Caco-2 (cell line): ENCODE measurements at regions of chr2 and their contacts with region 1.

Region 1: DNA sequence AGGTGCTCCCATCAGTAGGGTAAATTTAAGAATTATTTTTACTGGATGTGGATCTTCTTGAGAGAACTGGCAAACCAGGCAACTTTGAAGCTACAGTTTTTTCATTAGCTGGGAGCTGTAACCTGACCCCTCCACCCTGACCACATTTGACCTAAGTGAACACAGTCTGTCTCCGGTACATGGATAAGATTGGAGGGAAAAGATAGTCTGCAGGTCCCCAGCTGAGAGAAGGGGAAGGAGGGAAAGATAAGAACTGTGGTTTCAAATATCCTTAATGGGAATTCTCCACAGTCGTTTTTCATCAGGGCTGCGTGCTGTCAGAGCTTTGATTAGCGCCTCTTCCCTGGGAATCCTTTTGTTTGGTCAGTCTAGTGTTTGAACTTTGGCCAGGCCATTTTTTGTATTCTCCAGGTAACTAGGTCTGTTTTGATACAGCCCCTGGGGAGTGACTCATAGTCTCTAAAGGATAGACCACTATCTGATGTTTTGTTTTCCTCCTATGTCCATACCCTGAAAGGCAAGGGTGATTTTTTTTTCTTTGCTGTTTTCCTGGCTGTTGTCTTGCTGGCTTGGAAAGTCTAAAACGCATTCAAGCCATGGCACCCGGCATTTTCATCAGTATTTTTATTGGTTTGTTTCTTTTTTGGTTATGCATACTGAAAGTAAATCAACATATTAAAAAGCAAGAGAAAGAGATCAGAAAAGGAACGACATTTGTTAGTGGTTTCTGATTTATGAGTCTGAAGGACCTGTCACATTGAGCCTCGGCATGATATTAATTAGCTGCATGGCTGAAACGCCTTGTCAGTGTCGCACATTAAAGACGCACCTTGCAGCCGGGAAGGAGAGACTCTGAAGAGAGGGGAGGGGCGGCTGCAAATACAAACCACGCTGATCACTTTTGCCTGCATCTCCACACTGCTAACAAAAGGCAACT is 183.4 kb upstream of the FN1 start:
- DNase-seq: peak; percentile 89 to 94
- H3K4me3 ChIP-seq: peak overlapping the region; percentile 10; the same call in 1 of the 2 replicates
- H3K4me3 Mint-ChIP-seq: peak overlapping the region; percentile 68
- H3K27ac Mint-ChIP-seq: peak overlapping the region; percentile 95
- H3K4me1 ChIP-seq: peaks cover 58% of the 10 kb centered on the region
- H3K4me1 Mint-ChIP-seq: peaks cover 50% of the 10 kb centered on the region
- H3K27me3 ChIP-seq: no peaks in the 10 kb centered on the region
- H3K27me3 Mint-ChIP-seq: no peaks in the 10 kb centered on the region
- CTCF ChIP-seq: no peak

Region 2: DNA sequence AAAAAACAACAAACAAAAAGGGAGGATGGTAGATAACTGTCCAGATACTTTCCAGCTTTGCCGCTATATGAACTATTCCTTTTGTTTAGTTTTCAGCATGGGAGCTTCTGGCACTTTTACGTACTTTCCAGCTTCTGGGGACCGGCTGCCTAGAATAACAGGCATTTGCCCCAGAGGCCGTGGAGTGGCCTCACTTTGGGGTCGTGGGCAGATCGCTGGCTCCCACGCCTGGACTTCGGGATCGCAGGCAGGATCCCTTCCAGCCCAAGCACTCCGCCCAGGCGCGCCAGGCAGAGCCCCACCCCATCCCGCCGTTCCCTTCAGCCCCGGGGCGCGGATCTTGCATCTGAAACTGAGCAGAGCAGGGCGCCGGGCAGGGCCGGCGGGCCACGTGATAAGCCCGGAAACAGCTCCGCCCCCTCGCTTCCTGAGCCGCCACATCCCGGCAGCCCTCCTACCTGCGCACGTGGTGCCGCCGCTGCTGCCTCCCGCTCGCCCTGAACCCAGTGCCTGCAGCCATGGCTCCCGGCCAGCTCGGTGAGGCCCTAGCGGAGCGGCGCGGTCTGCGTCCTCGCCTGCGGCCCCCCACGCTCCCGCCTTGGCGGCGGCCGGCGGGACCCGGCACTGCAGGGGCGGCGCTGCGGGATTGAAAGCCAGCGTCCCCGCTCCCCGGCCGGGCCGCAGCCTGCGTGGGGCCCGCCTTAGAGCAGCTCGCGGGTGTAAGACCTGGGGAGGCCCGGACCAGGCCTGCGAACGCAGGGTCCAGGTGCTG is 307.5 kb before region 1 on chr2 and contains the start of gene ATIC:
- CTCF ChIA-PET with region 1: no interaction called
- POLR2A ChIA-PET with region 1: no interaction called
- intact Hi-C with region 1: loop called (anchors 10 kb)
- DNase-seq: peak; percentile 97
- H3K4me3 ChIP-seq: peak within 1 kb of the TSS; percentile 57
- H3K4me3 Mint-ChIP-seq: peak within 1 kb of the TSS; percentile 87
- H3K27ac Mint-ChIP-seq: peak within 1 kb of the TSS; percentile 83
- H3K4me1 ChIP-seq: peaks cover 25% of the 10 kb centered on the region
- H3K4me1 Mint-ChIP-seq: peaks cover 23% of the 10 kb centered on the region
- H3K27me3 ChIP-seq: no peaks in the 10 kb centered on the region
- H3K27me3 Mint-ChIP-seq: no peaks in the 10 kb centered on the region
- CTCF ChIP-seq: no peak
- total RNA-seq, gene ATIC: 318 and 325 TPM in 2 replicates

Region 3: GRCh38 chr2:215435809-215436704 is 183.2 kb before region 1 on chr2 and contains the start of gene FN1:
- CTCF ChIA-PET with region 1: no interaction called
- POLR2A ChIA-PET with region 1: interaction called, 7 read pairs
- intact Hi-C with region 1: loop called (anchors 1 kb)
- DNase-seq: peak; percentile 95 to 96
- H3K4me3 ChIP-seq: peak within 1 kb of the TSS; percentile 99
- H3K4me3 Mint-ChIP-seq: peak within 1 kb of the TSS; percentile 84
- H3K27ac Mint-ChIP-seq: peak within 1 kb of the TSS; percentile 94
- H3K4me1 ChIP-seq: peaks cover 40% of the 10 kb centered on the region
- H3K4me1 Mint-ChIP-seq: peaks cover 26% of the 10 kb centered on the region
- H3K27me3 ChIP-seq: no peaks in the 10 kb centered on the region
- H3K27me3 Mint-ChIP-seq: no peaks in the 10 kb centered on the region
- CTCF ChIP-seq: no peak
- total RNA-seq, gene FN1: 3,805 and 3,872 TPM in 2 replicates

Region 4: DNA sequence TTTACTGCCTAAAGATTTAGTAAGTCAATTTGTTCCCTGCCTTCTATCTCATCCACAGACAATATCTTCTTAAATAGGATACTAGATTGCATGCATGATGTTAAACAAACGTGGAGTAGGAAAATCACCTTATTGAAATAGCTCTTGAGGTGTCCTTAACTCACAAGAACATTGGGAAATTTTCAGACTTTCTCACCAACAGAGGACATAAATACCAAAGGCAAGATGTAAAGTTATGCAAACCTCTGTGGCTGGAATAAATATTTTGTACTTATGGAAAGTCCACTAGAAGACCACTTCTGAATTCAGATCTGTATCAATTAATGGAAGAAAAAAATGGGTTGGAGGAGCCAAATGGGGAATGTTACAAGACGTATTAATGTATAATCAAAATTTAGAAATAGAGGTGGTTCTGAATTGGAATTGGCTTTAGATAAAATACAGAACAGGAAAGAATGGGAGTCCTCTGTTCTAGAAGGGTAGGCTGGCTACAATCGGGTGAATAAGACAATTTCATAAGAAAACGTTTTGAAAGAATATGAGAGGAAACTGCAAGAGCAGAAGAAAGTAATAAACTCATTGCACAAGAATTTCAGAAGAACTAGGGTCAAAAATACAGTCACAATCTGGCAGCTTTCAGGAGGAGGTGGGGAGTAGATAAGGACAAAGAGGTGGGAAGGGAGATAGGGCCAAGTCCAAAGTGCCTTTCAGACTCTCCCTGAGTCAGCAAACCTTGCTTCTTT is 114.1 kb before region 1 on chr2:
- CTCF ChIA-PET with region 1: no interaction called
- POLR2A ChIA-PET with region 1: no interaction called
- intact Hi-C with region 1: loop called (anchors 1 kb)
- DNase-seq: peak; percentile 68 to 70
- H3K4me3 ChIP-seq: no peak overlapping the region
- H3K4me3 Mint-ChIP-seq: peak overlapping the region; percentile 54
- H3K27ac Mint-ChIP-seq: peak overlapping the region; percentile 46
- H3K4me1 ChIP-seq: peaks cover 42% of the 10 kb centered on the region
- H3K4me1 Mint-ChIP-seq: peaks cover 38% of the 10 kb centered on the region
- H3K27me3 ChIP-seq: no peaks in the 10 kb centered on the region
- H3K27me3 Mint-ChIP-seq: no peaks in the 10 kb centered on the region
- CTCF ChIP-seq: no peak

Region 5: GRCh38 chr2:215579809-215580208 is 39.5 kb before region 1 on chr2:
- CTCF ChIA-PET with region 1: no interaction called
- POLR2A ChIA-PET with region 1: no interaction called
- intact Hi-C with region 1: no loop called
- DNase-seq: no peak
- H3K4me3 ChIP-seq: no peak overlapping the region
- H3K4me3 Mint-ChIP-seq: no peak overlapping the region
- H3K27ac Mint-ChIP-seq: no peak overlapping the region
- H3K4me1 ChIP-seq: peaks cover 8% of the 10 kb centered on the region
- H3K4me1 Mint-ChIP-seq: no peaks in the 10 kb centered on the region
- H3K27me3 ChIP-seq: no peaks in the 10 kb centered on the region
- H3K27me3 Mint-ChIP-seq: no peaks in the 10 kb centered on the region
- CTCF ChIP-seq: no peak

Region 6: GRCh38 chr2:215598376-215598975 is 20.8 kb before region 1 on chr2:
- CTCF ChIA-PET with region 1: no interaction called
- POLR2A ChIA-PET with region 1: no interaction called
- intact Hi-C with region 1: no loop called
- DNase-seq: no peak
- H3K4me3 ChIP-seq: no peak overlapping the region
- H3K4me3 Mint-ChIP-seq: no peak overlapping the region
- H3K27ac Mint-ChIP-seq: no peak overlapping the region
- H3K4me1 ChIP-seq: no peaks in the 10 kb centered on the region
- H3K4me1 Mint-ChIP-seq: no peaks in the 10 kb centered on the region
- H3K27me3 ChIP-seq: no peaks in the 10 kb centered on the region
- H3K27me3 Mint-ChIP-seq: no peaks in the 10 kb centered on the region
- CTCF ChIP-seq: no peak

Region 7: DNA sequence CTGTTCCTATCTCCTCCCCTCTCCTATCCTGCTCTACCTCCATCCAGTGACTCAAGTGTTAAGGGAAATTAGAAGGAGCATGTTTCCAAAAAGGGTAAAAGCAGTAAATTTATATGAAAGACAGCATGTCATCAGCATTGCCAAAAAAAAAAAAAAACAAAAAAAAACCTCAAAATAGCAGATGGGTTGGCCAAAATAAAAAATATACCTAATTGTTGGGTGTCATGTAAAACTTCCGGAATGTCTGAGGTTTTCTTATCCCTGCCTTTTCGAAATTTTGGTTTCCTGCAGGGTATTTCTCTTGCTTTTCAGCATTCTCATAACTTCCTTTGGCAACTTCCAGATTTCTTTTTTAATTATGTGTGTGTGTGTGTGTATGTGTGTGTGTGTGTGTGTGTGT is 58.2 kb after region 1 on chr2:
- CTCF ChIA-PET with region 1: no interaction called
- POLR2A ChIA-PET with region 1: no interaction called
- intact Hi-C with region 1: no loop called
- DNase-seq: no peak
- H3K4me3 ChIP-seq: no peak overlapping the region
- H3K4me3 Mint-ChIP-seq: no peak overlapping the region
- H3K27ac Mint-ChIP-seq: peak overlapping the region; percentile 42
- H3K4me1 ChIP-seq: peaks cover 31% of the 10 kb centered on the region
- H3K4me1 Mint-ChIP-seq: peaks cover 42% of the 10 kb centered on the region
- H3K27me3 ChIP-seq: no peaks in the 10 kb centered on the region
- H3K27me3 Mint-ChIP-seq: no peaks in the 10 kb centered on the region
- CTCF ChIP-seq: no peak

Region 8: GRCh38 chr2:215793747-215794595 is 174.7 kb after region 1 on chr2:
- CTCF ChIA-PET with region 1: no interaction called
- POLR2A ChIA-PET with region 1: no interaction called
- intact Hi-C with region 1: loop called (anchors 1 kb)
- DNase-seq: peak in 1 of 2 experiments; percentile 62
- H3K4me3 ChIP-seq: no peak overlapping the region
- H3K4me3 Mint-ChIP-seq: no peak overlapping the region
- H3K27ac Mint-ChIP-seq: peak overlapping the region; percentile 81
- H3K4me1 ChIP-seq: peaks cover 41% of the 10 kb centered on the region
- H3K4me1 Mint-ChIP-seq: peaks cover 48% of the 10 kb centered on the region
- H3K27me3 ChIP-seq: no peaks in the 10 kb centered on the region
- H3K27me3 Mint-ChIP-seq: no peaks in the 10 kb centered on the region
- CTCF ChIP-seq: no peak

Region 9: DNA sequence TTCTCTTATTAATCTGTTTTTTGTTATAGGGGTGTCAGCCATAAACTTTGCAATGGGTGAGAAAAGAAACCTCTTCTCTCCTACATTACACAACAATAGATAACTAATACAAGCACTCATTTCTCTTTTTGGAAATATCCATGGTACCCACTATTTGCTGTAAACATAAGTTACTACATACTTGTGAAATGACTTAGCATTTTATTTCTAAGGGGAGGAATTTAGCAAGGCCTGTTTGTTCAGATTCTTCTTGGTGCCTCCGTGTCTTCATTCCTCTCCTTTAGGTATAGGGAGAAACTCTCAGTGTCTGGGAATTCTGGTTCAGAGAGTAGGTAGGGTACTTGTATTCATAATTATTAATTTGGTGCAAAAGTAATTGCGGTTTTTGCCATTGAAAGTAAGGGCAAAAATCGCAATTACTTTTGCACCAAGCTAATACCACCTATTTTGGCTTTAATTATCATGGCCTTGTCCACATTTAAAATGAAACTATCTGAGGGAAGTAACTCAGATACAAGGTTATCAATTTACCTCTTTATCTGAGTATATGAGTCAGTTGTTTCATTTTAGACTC is 259.3 kb after region 1 on chr2:
- CTCF ChIA-PET with region 1: no interaction called
- POLR2A ChIA-PET with region 1: no interaction called
- intact Hi-C with region 1: loop called (anchors 2 kb)
- DNase-seq: peak in 1 of 2 experiments; percentile 39
- H3K4me3 ChIP-seq: no peak overlapping the region
- H3K4me3 Mint-ChIP-seq: no peak overlapping the region
- H3K27ac Mint-ChIP-seq: peak overlapping the region; percentile 74
- H3K4me1 ChIP-seq: peaks cover 40% of the 10 kb centered on the region
- H3K4me1 Mint-ChIP-seq: peaks cover 28% of the 10 kb centered on the region
- H3K27me3 ChIP-seq: no peaks in the 10 kb centered on the region
- H3K27me3 Mint-ChIP-seq: no peaks in the 10 kb centered on the region
- CTCF ChIP-seq: no peak